ENCODE measurements at regions of chr16 and their contacts with region 1.

Region 1: GRCh38 chr16:76681296-76681695 is 404.1 kb downstream of the CNTNAP4 start:
- DNase-seq: no peak
- ATAC-seq: no peak
- H3K4me3 Mint-ChIP-seq: no peak overlapping the region
- H3K27ac Mint-ChIP-seq: no peak overlapping the region
- H3K4me1 Mint-ChIP-seq: no peaks in the 10 kb centered on the region
- H3K27me3 Mint-ChIP-seq: no peaks in the 10 kb centered on the region
- CTCF ChIP-seq: no peak

Region 2: DNA sequence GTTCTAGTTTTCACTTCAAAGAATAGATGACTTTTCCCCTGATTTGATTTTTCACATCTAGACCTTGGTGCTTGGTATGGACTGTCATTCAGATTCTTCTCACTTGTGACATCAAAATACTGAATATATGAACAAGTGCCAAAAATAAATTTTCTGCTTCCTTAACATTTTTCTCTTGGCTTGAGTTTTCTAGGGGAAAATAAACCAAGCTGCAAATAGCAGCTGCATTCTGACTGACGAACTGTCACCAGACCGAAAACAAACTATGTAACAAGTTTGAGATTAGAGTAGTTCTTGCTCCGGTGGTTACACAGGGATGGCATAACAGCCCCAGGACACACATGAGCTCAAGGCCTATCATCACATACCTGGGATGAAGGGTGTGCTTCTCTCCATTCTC is 58.4 kb before region 1 on chr16:
- CTCF ChIA-PET with region 1: no interaction called
- POLR2A ChIA-PET with region 1: no interaction called
- intact Hi-C with region 1: loop called (anchors 10 kb)
- DNase-seq: no peak
- ATAC-seq: no peak
- H3K4me3 Mint-ChIP-seq: no peak overlapping the region
- H3K27ac Mint-ChIP-seq: no peak overlapping the region
- H3K4me1 Mint-ChIP-seq: no peaks in the 10 kb centered on the region
- H3K27me3 Mint-ChIP-seq: peaks cover 2% of the 10 kb centered on the region
- CTCF ChIP-seq: no peak

Region 3: DNA sequence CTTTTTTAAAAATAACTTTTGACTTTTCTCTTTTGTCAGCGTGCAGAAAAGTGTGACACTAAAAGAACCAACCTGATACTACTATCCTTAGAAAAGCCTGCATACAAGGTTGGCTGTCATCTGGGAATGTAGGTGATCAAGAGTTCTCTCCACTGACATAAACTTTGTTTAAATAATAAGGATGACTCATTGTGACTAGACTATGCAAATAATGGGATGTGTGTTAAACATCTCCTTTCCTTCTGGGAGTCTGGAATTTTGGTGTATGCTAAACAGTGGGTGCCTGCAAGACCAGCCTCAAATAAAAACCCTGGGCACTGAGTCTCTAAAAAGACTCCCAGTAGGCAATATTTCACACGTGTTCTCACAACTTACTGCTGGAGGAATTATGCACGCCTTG is 30.7 kb before region 1 on chr16:
- CTCF ChIA-PET with region 1: no interaction called
- POLR2A ChIA-PET with region 1: no interaction called
- intact Hi-C with region 1: no loop called
- DNase-seq: no peak
- ATAC-seq: no peak
- H3K4me3 Mint-ChIP-seq: no peak overlapping the region
- H3K27ac Mint-ChIP-seq: no peak overlapping the region
- H3K4me1 Mint-ChIP-seq: no peaks in the 10 kb centered on the region
- H3K27me3 Mint-ChIP-seq: no peaks in the 10 kb centered on the region
- CTCF ChIP-seq: no peak

Region 4: DNA sequence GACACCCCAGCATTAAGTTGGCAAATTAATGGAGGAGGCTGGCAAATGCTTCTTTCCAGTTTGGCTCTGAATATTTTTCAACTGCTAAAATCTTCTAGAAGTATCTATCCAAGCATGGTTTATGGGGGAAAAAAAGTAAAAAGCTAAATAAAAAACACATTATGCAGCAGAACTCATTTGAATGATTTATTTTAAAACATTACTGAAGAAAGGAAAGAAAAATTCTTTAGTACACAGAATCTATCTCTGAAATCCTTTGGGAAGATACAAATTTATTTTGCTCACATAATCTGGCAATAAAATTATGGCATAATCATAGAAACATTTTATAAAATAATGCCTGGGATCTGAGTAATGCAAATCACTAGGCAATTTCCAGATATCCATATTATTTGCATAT is 181.6 kb after region 1 on chr16:
- CTCF ChIA-PET with region 1: no interaction called
- POLR2A ChIA-PET with region 1: no interaction called
- intact Hi-C with region 1: no loop called
- DNase-seq: no peak
- ATAC-seq: no peak
- H3K4me3 Mint-ChIP-seq: no peak overlapping the region
- H3K27ac Mint-ChIP-seq: no peak overlapping the region
- H3K4me1 Mint-ChIP-seq: no peaks in the 10 kb centered on the region
- H3K27me3 Mint-ChIP-seq: no peaks in the 10 kb centered on the region
- CTCF ChIP-seq: no peak